Cardiac septum (tissue), 1 donor: ENCODE measurements at regions of chr14 and their contacts with region 1.

Region 1: GRCh38 chr14:77097700-77098528 is at the start of gene CIPC:
- DNase-seq: peak; percentile 100
- total RNA-seq, gene CIPC: 45.9 TPM

Region 2: GRCh38 chr14:76767681-76768656 is 329.9 kb before region 1 on chr14:
- intact Hi-C with region 1: no loop called
- DNase-seq: peak; percentile 90

Region 3: GRCh38 chr14:77033622-77034521 is 64.0 kb before region 1 on chr14:
- intact Hi-C with region 1: loop called (anchors 2 kb)
- DNase-seq: peak; percentile 95

Region 4: DNA sequence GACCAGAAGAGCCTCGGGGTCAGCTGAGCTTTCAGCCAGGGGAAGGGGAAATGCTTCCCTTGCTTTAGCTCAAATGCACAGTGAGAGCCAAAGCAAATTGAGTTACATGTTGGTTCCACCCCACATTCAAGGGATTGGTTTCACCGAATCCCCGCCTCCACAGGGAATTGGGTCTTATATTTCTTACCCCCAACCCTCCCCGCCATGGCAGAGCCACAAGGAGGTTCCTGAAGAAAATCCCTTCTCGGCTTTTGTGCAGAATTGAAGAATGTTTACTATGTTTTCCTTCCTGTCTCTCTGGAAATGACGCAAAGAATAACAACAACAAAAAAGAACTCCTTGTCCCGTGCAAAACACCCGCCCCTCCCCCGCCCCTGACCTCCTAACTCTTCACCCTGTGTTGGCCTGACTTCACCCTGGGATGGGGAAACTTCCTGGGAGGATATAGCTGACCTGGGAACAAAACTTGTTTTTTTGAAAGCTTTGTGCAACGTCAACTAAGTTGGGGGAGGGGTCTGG is 21.7 kb before region 1 on chr14:
- intact Hi-C with region 1: loop called (anchors 2 kb)
- DNase-seq: peak; percentile 81